ENCODE measurements at regions of chr16 and their contacts with region 1.

Region 1: GRCh38 chr16:31868691-31869167 is 4.9 kb upstream of the ZNF267 start:
- DNase-seq: peak; percentile 72 to 84 (median 77)
- ATAC-seq: peak in 3 of 4 donors; percentile 55 to 69 (median 64)
- H3K4me3 ChIP-seq: peak overlapping the region in 2 of 12 donors; percentile 13 to 37
- H3K27ac ChIP-seq: peak overlapping the region in 4 of 12 donors; percentile 14 to 91 (median 18)
- H3K4me1 ChIP-seq: peaks cover 0 to 36% (median 8%) of the 10 kb centered on the region in 12 donors
- H3K27me3 ChIP-seq: no peaks in the 10 kb centered on the region
- CTCF ChIP-seq: peak; percentile 75 to 89 (median 80)
- POLR2A ChIP-seq: no peak

Region 2: DNA sequence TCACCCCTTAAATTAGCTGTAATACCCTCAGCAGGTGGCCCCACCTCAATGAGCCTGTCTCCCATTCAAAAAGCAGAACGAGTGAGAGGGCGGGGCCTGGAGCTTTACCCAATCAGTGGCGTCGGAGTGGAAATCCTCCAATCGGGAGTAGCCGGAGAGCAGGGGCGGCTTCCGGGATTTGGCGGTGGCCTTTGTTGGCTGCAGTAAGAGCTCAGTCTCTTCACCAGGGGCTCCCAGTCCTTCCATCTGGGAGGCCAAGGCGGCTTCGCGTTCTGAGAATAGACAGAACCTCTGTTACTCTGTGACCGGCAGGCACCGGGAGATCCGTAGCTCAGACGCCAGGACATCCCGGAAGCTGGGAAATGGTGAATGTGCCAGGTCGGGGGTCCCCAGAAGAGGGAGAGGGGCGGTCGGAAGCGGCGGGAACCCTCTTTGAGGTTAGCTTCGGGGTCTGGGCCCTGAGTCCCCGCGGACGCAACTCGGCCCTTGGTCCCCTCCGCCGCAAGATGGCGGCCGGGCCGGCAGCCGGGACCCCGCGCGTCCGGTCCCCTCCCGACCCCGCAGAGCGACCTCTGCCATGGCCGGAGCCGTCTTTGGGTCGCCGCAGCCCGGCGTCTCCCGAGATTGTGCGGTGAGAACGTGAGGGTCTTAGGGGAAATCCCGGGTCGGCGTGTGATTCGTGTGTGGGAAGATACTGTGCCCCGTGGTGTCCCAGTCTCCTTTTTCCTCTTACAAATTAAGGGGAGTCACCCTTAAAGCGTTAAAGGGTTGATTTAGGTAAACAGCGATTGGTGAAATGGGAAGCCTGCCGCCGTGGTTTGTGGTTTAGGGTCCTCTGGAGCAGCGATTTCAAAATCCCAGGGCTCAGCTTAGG is 155.4 kb before region 1 on chr16:
- intact Hi-C with region 1: loop called in 7 of 10 experiments (anchors 5 to 10 kb)
- DNase-seq: peak; percentile 93 to 96 (median 94)
- ATAC-seq: peak; percentile 94 to 98 (median 96)
- H3K4me3 ChIP-seq: peak overlapping the region; percentile 75 to 100 (median 88)
- H3K27ac ChIP-seq: peak overlapping the region; percentile 82 to 99 (median 96)
- H3K4me1 ChIP-seq: peaks cover 0 to 26% (median 15%) of the 10 kb centered on the region in 12 donors
- H3K27me3 ChIP-seq: no peaks in the 10 kb centered on the region
- CTCF ChIP-seq: peak in 1 of 12 donors; percentile 7
- POLR2A ChIP-seq: peak; percentile 75 to 93

Region 3: DNA sequence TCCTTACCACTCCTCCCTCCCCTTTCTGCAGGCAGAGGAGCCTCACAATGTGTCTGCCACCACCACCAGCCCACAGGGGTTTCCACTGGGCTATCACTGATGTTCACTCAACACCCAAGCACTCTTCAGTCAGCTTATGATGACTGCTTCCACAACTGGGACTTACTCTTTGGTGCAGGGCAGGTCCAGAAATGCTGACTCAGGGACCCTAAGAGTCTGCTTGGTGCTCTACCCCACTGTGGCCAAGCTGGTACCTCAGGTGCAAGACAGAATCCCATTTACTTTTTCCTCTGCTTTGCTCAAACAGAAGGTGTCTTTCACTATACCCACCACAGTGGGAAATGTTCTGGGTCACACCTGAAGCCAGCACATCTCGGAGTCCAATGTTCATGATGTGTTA is 44.9 kb after region 1 on chr16:
- intact Hi-C with region 1: no loop called
- DNase-seq: no peak
- ATAC-seq: no peak
- H3K4me3 ChIP-seq: no peak overlapping the region
- H3K27ac ChIP-seq: no peak overlapping the region
- H3K4me1 ChIP-seq: no peaks in the 10 kb centered on the region
- H3K27me3 ChIP-seq: no peaks in the 10 kb centered on the region
- CTCF ChIP-seq: no peak
- POLR2A ChIP-seq: no peak